ENCODE measurements at regions of chr17 and their contacts with region 1.

Region 1: DNA sequence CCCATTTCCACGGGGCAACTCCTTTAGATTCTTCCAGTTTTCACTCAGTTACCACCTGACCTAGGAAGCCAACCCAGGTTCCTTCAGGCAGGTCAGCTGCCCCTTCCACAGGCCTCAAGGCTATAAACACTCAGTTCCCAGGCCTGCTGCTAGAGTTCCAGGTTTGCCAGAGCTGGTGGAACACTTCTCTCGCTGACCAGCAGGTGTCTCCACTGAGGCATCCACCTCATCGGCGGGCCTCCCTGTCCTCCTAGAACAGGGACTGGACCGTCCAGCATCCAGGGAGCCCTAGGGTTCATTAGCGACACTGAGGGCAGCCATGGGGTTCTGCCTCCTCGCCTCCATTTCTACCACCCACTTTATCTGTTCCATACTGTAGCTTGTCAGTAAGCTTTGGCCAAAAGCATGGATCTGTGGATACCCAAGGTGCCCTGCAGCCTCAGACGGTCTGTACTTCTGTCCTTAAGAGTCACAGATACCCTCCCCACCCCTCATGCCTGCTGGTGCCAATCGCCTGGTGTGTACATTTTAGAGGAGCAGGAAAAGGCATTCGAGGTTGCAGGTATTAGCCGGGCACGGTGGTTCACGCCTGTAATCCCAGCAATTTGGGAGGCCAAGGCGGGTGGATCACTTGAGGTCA is 29.0 kb downstream of the PIMREG start:
- DNase-seq: peak; percentile 49
- ATAC-seq: peak; percentile 65
- H3K4me3 Mint-ChIP-seq: no peak overlapping the region
- H3K27ac Mint-ChIP-seq: no peak overlapping the region
- H3K4me1 Mint-ChIP-seq: peaks cover 3% of the 10 kb centered on the region
- H3K27me3 Mint-ChIP-seq: peaks cover 3% of the 10 kb centered on the region
- CTCF ChIP-seq: peak; percentile 93

Region 2: DNA sequence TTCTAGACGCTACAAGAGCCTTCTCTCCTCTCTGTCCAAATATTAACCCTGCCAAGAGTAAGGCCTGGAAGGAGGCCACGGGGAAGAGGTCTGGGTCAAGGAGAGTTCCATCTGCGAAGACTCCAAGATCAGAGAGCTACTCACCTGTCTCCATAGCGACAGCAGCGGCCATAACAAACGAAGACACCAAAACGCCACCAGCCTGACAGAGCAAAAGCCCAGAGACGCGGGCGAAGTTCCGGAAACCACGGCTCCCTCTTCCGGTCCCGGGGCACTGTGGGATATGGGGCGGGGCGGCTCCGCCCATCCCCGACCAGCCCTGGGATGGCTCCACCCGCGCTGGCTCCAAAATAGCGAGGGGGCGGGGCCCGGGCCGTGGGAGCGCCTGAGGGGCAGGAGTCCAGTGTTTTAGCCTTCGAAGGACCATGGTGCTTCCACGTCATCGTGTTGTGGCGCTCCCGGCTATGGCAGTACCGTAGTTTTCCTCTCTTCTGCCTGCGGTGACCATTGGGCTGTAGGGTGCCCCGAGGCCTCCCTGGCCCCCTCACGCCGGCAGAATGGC is 178.2 kb after region 1 on chr17 and contains the starts of genes C17orf100 and MED31:
- CTCF ChIA-PET with region 1: interaction called, 12 read pairs
- POLR2A ChIA-PET with region 1: interaction called, 3 read pairs
- intact Hi-C with region 1: no loop called
- DNase-seq: peak; percentile 97
- ATAC-seq: peak; percentile 90
- H3K4me3 Mint-ChIP-seq: peak within 1 kb of the TSS; percentile 100
- H3K27ac Mint-ChIP-seq: peak within 1 kb of the TSS; percentile 100
- H3K4me1 Mint-ChIP-seq: peaks cover 69% of the 10 kb centered on the region
- H3K27me3 Mint-ChIP-seq: no peaks in the 10 kb centered on the region
- CTCF ChIP-seq: no peak
- total RNA-seq, gene C17orf100: 2.9 and 3.5 TPM in 2 replicates
- total RNA-seq, gene MED31: 16.5 and 23.4 TPM in 2 replicates

Region 3: GRCh38 chr17:6701719-6702118 is 228.5 kb after region 1 on chr17:
- CTCF ChIA-PET with region 1: interaction called, 15 read pairs
- POLR2A ChIA-PET with region 1: no interaction called
- intact Hi-C with region 1: loop called (anchors 1 kb)
- DNase-seq: peak; percentile 22
- ATAC-seq: peak; percentile 62
- H3K4me3 Mint-ChIP-seq: no peak overlapping the region
- H3K27ac Mint-ChIP-seq: no peak overlapping the region
- H3K4me1 Mint-ChIP-seq: peaks cover 3% of the 10 kb centered on the region
- H3K27me3 Mint-ChIP-seq: peaks cover 19% of the 10 kb centered on the region
- CTCF ChIP-seq: no peak

Region 4: GRCh38 chr17:6800422-6801027 is 327.3 kb after region 1 on chr17:
- CTCF ChIA-PET with region 1: no interaction called
- POLR2A ChIA-PET with region 1: no interaction called
- intact Hi-C with region 1: loop called (anchors 1 kb)
- DNase-seq: no peak
- ATAC-seq: no peak
- H3K4me3 Mint-ChIP-seq: no peak overlapping the region
- H3K27ac Mint-ChIP-seq: no peak overlapping the region
- H3K4me1 Mint-ChIP-seq: no peaks in the 10 kb centered on the region
- H3K27me3 Mint-ChIP-seq: peaks cover 2% of the 10 kb centered on the region
- CTCF ChIP-seq: no peak